Activated CD4-positive, alpha-beta T cell treated with anti-CD3 and anti-CD28 coated beads, Interleukin-2, amount 10 ng/mL, durations not matched to agents 24 days and 14 days (primary cell): ENCODE measurements at regions of chr1 and their contacts with region 1.

Region 1: DNA sequence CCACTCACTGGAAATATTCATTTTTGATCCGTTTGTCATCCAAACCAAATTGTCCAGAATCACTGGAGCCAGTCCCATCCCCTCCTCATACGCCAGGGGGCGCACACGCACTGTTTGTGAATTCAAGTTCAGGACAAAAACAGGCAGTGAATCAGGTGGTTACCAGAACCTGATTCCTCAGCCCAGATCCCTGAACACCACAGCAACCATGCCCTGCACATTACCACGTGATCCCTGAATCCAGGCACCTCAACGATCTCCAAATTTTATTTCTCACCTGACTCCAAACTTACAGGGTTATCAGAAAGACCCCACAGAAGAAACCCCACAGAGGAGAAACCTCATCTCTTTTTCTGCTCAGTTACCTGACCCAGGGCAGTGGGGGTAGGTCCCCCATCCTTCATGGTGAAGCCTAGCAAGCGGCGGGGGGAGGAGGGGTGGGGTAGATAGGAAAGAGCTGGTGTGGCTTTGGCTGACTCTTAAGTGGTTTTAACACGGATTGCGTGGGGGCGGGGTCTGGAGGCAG is 1.4 kb upstream of the PTPRF start:
- DNase-seq: peak; percentile 94
- H3K4me3 Mint-ChIP-seq: peak overlapping the region; percentile 41
- H3K27ac Mint-ChIP-seq: peak overlapping the region; percentile 30
- H3K4me1 Mint-ChIP-seq: peaks cover 15% of the 10 kb centered on the region
- H3K27me3 Mint-ChIP-seq: peaks cover 44% of the 10 kb centered on the region

Region 2: DNA sequence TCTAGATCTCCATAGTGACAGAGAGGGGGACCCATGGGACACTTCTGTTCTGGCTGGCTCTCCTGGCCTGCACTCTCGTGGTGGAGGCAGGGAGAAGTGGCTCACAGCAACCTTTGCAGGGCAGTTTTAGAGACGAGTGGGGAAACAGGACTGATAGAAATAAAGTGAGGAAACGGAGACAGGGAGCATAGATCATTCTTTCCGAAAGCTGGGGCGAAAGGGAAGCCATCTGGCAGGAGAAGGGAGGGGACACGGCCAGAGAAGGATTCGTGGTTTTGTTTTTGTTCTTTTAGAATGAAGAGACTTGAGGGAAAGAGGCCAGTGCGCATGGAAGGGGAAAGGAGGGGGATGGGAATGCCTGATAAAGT is 225.0 kb before region 1 on chr1:
- intact Hi-C with region 1: no loop called
- DNase-seq: no peak
- H3K4me3 Mint-ChIP-seq: no peak overlapping the region
- H3K27ac Mint-ChIP-seq: no peak overlapping the region
- H3K4me1 Mint-ChIP-seq: peaks cover 2% of the 10 kb centered on the region
- H3K27me3 Mint-ChIP-seq: no peaks in the 10 kb centered on the region

Region 3: DNA sequence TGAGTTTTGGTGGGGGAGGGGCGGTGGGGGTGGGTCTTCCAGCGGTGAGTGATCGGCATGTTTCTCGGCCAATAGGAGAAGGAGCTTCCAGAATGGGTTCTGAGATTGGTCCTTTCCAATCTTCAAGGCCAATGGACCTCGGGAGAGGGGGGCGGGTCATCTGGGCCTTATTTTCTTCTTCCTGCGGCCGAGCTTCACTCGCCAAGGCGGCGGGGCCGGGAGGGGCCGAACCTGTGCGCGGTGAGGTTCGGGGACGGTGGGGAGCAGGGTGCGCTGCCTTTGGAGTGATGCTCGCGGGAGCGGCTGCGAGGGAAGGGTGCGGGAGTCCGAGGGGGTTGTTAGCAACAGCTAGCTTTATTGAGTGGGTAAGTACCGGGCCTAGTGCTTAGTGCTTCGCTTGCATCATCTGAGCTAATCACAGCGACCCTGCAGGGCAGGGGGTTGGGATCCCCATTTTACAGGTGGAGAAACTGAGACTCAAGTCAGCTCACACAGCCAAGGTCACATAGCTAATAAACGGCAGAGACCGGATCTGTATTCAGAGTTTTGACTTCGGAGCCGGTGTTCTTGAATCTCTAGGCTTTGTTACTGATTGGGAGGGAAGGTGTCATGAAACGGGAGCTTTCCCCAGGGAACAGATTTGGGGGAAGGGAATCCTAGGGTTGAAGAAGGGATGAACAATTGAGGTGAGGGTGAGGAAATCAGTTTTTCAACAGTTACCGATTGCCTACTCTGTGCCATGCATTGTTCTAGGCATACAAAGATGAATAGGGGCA is 121.2 kb after region 1 on chr1:
- intact Hi-C with region 1: loop called (anchors 1 kb)
- DNase-seq: peak; percentile 97
- H3K4me3 Mint-ChIP-seq: peak overlapping the region; percentile 91
- H3K27ac Mint-ChIP-seq: peak overlapping the region; percentile 98
- H3K4me1 Mint-ChIP-seq: peaks cover 25% of the 10 kb centered on the region
- H3K27me3 Mint-ChIP-seq: peaks cover 5% of the 10 kb centered on the region

Region 4: DNA sequence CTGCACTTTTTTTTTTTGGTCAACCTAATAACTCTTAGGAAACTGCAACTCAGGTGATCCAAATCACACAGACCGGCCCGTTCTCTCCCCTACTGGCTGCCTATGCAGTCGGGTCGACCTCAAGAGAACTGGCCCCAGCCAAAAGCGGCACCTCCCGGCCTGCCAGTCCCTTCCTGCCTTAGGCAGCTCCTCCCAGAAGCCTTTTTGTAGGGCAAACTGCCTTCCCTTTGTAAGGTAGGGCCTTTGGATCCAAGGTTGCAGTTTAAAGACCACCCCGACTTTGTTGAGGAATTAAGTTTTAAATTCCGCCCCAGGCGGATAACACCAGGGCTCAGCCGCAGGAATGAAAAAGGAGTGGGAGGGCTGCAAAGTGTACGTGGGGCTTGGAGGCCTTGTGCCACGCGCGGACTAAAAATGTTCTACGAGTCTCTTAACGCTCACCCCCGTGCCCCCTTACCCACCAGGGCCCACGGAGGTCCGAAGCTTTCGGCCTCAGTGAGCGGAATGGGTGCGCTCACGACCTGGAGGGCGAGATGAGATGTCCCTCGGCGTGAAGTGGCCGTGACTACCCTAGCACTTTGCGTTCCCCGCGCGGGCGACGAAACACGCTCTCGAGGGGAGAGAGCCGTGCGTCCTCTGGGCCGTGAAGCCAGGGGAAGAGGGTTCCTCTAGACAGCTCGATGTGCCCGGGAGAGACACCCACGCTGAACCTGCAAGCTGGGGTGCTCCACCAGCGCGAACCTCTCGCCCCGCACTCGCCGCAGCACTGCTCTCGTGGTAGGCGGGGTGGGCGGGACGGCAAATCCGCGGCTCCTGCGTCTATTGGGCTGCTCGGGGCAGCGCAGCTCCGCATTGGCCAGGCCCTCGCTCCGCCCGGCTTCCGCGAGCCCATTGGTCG is 177.6 kb after region 1 on chr1:
- intact Hi-C with region 1: loop called (anchors 2 kb)
- DNase-seq: peak; percentile 98
- H3K4me3 Mint-ChIP-seq: peak overlapping the region; percentile 93
- H3K27ac Mint-ChIP-seq: peak overlapping the region; percentile 89
- H3K4me1 Mint-ChIP-seq: peaks cover 32% of the 10 kb centered on the region
- H3K27me3 Mint-ChIP-seq: no peaks in the 10 kb centered on the region

Region 5: DNA sequence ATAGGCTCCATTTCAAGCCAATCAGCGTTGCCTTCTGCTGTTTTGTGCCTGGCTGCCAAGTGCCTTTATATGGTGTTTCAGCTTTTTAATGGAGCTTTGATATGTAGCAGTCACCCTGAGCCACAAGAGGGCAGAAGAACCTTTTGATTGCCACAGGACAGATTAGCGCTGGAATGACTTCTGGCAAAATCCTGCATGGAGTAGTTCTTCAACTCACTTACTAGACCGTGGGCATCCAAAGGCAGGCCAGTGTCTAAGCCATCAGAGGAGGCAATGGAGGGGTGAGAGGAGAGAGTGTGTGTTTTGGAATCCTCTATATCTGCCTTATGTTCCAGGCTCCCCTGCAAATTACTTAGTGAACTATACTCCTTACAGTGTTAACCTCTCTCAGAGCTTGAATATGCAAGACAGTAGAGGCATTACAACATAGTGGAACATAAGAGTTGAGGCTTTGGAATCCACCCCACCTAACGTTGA is 234.3 kb after region 1 on chr1:
- intact Hi-C with region 1: loop called (anchors 1 kb)
- DNase-seq: peak; percentile 85
- H3K4me3 Mint-ChIP-seq: no peak overlapping the region
- H3K27ac Mint-ChIP-seq: no peak overlapping the region
- H3K4me1 Mint-ChIP-seq: peaks cover 2% of the 10 kb centered on the region
- H3K27me3 Mint-ChIP-seq: no peaks in the 10 kb centered on the region

Region 6: DNA sequence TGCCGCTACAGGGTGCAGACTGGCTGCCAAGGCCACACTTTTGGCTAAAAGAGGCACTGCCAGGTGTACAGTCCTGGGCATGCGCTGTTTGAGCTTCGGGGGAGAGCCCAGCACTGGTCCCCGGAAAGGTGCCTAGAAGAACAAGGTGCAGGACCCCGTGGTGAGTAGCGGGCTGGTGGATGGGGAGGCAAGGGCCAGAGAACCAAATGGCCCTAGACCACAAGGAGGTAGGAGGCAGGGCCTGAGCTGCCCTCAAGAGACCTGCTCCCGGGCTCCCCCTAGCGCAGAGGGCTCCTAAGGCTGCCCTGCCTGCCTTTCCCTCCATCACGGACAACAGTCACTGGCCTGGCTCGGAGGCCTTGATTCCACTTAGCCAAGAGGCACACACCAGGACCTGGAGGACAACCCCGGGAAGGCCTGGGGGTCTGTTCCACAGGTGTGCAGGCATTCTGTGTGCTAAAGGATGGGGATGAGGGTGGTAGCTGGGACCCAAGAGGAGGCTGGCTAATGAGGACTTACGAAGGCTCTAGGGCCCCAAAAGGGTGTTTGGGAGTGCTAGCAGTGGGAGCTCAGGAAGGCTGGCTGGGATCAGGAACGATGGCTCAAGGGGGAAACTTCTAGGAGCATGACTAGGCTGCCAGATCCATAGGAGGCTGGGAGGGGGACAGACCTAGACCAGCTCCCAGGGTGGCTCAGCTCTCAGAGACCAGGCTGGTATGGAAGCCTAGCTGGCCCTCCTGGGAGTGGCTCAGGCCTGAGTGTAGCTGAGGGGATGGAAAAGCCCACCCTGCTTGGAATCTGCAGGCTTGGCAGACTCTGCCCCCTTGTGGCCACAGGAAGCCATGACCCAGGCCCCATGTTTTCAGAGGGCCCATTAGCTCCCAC is 405.1 kb after region 1 on chr1:
- intact Hi-C with region 1: loop called (anchors 5 kb)
- DNase-seq: peak; percentile 87
- H3K4me3 Mint-ChIP-seq: peak overlapping the region; percentile 23
- H3K27ac Mint-ChIP-seq: no peak overlapping the region
- H3K4me1 Mint-ChIP-seq: peaks cover 11% of the 10 kb centered on the region
- H3K27me3 Mint-ChIP-seq: peaks cover 9% of the 10 kb centered on the region

Region 7: GRCh38 chr1:44036409-44037139 is 507.3 kb after region 1 on chr1:
- intact Hi-C with region 1: loop called (anchors 2 kb)
- DNase-seq: peak; percentile 91
- H3K4me3 Mint-ChIP-seq: no peak overlapping the region
- H3K27ac Mint-ChIP-seq: peak overlapping the region; percentile 18
- H3K4me1 Mint-ChIP-seq: peaks cover 14% of the 10 kb centered on the region
- H3K27me3 Mint-ChIP-seq: peaks cover 11% of the 10 kb centered on the region